Right ventricle myocardium inferior (tissue), 1 donor: ENCODE measurements at regions of chr3 and their contacts with region 1.

Region 1: DNA sequence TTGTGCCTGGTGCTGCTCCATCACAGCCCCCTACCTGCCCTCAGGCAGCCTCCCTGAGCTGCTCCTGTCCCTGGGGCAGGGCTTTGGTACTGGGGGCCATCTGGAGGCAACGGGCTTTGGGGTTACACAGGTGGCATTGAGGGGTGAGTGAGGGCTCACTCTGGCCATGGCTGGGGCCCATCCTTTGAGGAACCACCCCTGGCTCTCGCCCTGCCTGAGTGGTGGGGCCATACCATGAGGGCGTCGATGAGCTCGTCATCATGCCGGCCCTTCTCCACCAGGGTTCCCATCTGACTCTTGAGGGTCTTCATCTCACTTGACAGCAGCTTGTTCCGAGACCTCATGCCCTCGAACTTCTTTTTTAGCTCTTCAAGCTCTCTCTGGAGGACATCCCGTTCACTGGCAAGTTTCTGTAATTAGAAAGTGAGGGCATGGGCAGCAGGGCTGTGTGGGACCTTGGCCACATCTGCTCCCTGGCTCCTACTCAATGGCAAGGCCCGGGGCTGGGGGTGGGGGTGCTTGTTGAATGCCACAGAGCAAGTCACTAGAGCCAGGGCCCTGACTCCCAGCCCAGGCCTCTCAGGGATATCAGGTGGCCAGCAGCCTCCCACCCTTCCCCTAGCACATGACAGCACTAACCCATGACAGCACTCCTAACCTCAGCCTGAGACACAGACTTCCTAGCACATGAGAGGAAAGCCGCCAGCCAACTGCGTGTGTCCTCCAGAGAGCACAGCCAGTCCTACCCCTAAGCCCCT is 33.5 kb downstream of the CCDC13 start:
- DNase-seq: peak; percentile 92
- ATAC-seq: peak; percentile 96

Region 2: DNA sequence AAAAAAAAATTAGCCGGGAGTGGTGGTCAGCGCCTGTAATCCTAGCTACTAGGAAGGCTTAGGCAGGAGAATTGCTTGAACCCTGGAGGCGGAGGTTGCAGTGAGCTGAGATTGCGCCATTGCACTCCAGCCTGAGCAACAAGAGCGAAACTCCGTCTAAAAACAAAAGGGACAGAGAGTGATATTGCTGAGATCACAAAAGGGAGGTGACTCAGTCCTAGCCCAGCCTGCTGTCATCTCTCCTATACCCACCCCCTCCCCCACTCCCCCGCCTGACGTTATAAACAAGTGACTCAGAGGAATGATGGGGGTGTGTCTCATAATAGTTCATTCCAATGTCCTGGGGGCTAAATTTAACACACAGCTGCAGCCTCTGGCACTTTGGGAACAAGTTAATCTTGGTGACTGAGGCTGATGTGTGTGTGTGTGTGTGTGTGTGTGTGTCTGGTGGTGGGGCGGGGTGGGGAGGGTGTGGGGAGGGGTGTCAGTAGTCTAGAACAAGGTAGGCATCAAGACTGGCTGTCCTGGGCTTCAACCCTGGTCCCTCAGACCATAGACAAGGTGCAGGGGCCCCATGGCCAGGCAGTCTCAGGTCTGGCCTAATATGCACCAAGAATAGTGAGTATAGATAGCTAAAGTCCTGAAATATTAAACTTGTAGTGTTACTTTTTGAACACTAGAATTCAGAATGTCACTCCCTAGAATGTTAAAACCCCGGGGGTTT is 55.5 kb before region 1 on chr3:
- intact Hi-C with region 1: loop called (anchors 1 kb)
- DNase-seq: no peak
- ATAC-seq: peak; percentile 90

Region 3: DNA sequence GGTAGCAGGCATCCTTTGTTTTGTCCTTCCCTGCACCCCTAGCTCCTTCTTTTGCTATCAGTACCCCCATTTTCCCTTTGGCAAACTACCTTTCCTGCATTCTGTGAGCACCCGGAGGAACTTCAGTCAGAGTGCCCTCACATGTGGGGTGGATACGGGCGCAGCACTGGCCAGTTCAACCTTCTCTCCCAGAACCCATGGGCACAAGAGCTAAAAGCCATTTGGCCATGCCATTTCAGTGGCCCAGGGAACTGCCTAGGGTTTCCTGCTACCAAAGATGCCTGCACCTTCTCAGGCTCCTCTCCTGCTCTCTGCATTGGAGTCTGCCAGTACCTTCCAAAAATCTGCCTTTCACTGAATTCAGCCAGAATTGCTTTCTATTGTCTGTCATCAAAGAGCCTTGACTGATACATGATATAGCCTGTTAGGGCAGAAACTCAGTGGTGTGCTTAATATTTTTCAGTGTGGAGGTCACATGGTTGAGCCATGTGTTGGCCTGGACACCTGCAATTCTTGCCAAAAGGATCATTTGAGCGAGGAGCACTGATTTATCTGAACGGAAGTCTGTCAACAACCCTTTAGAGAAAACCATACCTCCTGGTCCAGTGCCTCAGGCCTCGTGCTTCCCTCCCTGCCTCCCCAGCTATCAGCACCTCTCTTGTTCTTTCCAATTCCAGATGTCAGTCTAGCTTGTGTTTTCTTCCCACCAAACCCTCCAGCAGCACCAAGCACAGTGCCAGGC is 10.0 kb before region 1 on chr3:
- intact Hi-C with region 1: loop called (anchors 1 kb)
- DNase-seq: no peak
- ATAC-seq: peak; percentile 84